ENCODE measurements at regions of chr7 and their contacts with region 1.

Region 1: GRCh38 chr7:55534175-55534915 is 38.0 kb downstream of the VOPP1 start:
- DNase-seq: peak; percentile 93
- H3K4me3 Mint-ChIP-seq: peak overlapping the region; percentile 67
- H3K27ac Mint-ChIP-seq: peak overlapping the region; percentile 97
- H3K4me1 Mint-ChIP-seq: peaks cover 97% of the 10 kb centered on the region
- H3K27me3 Mint-ChIP-seq: no peaks in the 10 kb centered on the region

Region 2: GRCh38 chr7:55409482-55410225 is 124.7 kb before region 1 on chr7:
- CTCF ChIA-PET with region 1: no interaction called
- intact Hi-C with region 1: no loop called
- DNase-seq: no peak
- H3K4me3 Mint-ChIP-seq: no peak overlapping the region
- H3K27ac Mint-ChIP-seq: no peak overlapping the region
- H3K4me1 Mint-ChIP-seq: no peaks in the 10 kb centered on the region
- H3K27me3 Mint-ChIP-seq: no peaks in the 10 kb centered on the region

Region 3: GRCh38 chr7:55432939-55433784 is 101.2 kb before region 1 on chr7:
- CTCF ChIA-PET with region 1: interaction called, 9 read pairs
- intact Hi-C with region 1: loop called (anchors 1 kb)
- DNase-seq: peak; percentile 56
- H3K4me3 Mint-ChIP-seq: no peak overlapping the region
- H3K27ac Mint-ChIP-seq: no peak overlapping the region
- H3K4me1 Mint-ChIP-seq: peaks cover 37% of the 10 kb centered on the region
- H3K27me3 Mint-ChIP-seq: no peaks in the 10 kb centered on the region

Region 4: GRCh38 chr7:55509322-55509721 is 25.0 kb before region 1 on chr7:
- CTCF ChIA-PET with region 1: interaction called, 16 read pairs
- intact Hi-C with region 1: loop called (anchors 1 kb)
- DNase-seq: peak; percentile 36
- H3K4me3 Mint-ChIP-seq: no peak overlapping the region
- H3K27ac Mint-ChIP-seq: peak overlapping the region; percentile 85
- H3K4me1 Mint-ChIP-seq: peaks cover 89% of the 10 kb centered on the region
- H3K27me3 Mint-ChIP-seq: no peaks in the 10 kb centered on the region

Region 5: GRCh38 chr7:55557666-55558188 is 23.4 kb after region 1 on chr7:
- CTCF ChIA-PET with region 1: interaction called, 4 read pairs
- intact Hi-C with region 1: loop called (anchors 1 kb)
- DNase-seq: peak; percentile 39
- H3K4me3 Mint-ChIP-seq: no peak overlapping the region
- H3K27ac Mint-ChIP-seq: peak overlapping the region; percentile 50
- H3K4me1 Mint-ChIP-seq: peaks cover 90% of the 10 kb centered on the region
- H3K27me3 Mint-ChIP-seq: no peaks in the 10 kb centered on the region

Region 6: GRCh38 chr7:55794527-55794926 is 260.2 kb after region 1 on chr7:
- CTCF ChIA-PET with region 1: no interaction called
- intact Hi-C with region 1: no loop called
- DNase-seq: no peak
- H3K4me3 Mint-ChIP-seq: no peak overlapping the region
- H3K27ac Mint-ChIP-seq: no peak overlapping the region
- H3K4me1 Mint-ChIP-seq: no peaks in the 10 kb centered on the region
- H3K27me3 Mint-ChIP-seq: peaks cover 2% of the 10 kb centered on the region

Region 7: GRCh38 chr7:56051339-56052191 is 517.2 kb after region 1 on chr7 and contains the starts of genes CCT6A and PSPH:
- CTCF ChIA-PET with region 1: no interaction called
- intact Hi-C with region 1: loop called (anchors 5 kb)
- DNase-seq: peak; percentile 94
- H3K4me3 Mint-ChIP-seq: peak within 1 kb of the TSS; percentile 95
- H3K27ac Mint-ChIP-seq: peak within 1 kb of the TSS; percentile 95
- H3K4me1 Mint-ChIP-seq: peaks cover 48% of the 10 kb centered on the region
- H3K27me3 Mint-ChIP-seq: no peaks in the 10 kb centered on the region
- total RNA-seq, gene CCT6A: 225 to 231 TPM
- total RNA-seq, gene PSPH: 15.7 to 18.6 TPM